ENCODE measurements at regions of chr10 and their contacts with region 1.

Region 1: GRCh38 chr10:71893920-71894319 is 42.9 kb upstream of the PSAP start:
- DNase-seq: no peak
- H3K4me3 Mint-ChIP-seq: no peak overlapping the region
- H3K27ac Mint-ChIP-seq: no peak overlapping the region
- H3K4me1 Mint-ChIP-seq: peaks cover 6% of the 10 kb centered on the region
- H3K27me3 Mint-ChIP-seq: peaks cover 4% of the 10 kb centered on the region

Region 2: DNA sequence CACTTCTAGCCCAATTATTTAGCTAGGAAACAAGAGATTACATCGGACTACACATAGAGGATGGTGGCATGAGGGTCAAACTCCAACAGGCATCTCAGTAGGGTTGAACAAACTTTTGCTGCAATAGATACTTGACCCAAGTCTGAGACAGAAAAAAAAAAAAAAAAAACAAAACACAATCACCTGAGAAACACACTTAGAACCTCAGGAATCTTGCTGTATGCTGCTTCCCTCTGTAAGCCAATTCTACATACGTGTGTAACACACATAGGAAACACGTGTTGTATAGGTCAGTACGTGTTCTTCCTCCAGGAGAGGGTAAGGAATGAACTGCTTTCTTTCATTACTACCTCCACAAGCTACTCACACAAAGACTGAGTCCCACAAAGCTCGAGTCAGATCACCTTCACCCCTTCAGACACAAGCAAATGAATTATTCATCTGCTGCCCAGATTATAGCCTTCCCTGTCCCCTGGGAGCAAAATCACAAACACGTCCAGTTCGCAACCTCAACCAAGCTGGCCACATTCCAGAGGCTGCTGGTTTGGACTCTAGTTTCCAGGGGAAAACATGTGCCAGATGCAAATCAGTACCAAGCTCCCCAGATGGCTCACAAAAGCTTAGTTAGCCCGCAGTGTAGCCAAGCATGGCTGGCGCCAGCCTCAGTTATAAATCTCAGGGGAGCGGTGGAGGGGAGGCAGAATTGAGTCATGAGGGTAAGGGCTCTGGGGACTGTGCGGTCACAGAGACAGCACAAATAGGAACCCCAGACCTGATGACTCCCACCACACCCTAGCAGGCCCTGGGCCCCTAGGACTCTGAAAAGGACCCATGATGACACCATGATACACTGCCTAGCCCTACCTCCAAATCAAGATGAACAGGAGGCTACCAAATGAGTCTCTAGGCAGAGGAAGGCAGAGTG is 58.0 kb before region 1 on chr10:
- intact Hi-C with region 1: loop called (anchors 10 kb)
- DNase-seq: no peak
- H3K4me3 Mint-ChIP-seq: no peak overlapping the region
- H3K27ac Mint-ChIP-seq: no peak overlapping the region
- H3K4me1 Mint-ChIP-seq: peaks cover 33% of the 10 kb centered on the region
- H3K27me3 Mint-ChIP-seq: no peaks in the 10 kb centered on the region

Region 3: DNA sequence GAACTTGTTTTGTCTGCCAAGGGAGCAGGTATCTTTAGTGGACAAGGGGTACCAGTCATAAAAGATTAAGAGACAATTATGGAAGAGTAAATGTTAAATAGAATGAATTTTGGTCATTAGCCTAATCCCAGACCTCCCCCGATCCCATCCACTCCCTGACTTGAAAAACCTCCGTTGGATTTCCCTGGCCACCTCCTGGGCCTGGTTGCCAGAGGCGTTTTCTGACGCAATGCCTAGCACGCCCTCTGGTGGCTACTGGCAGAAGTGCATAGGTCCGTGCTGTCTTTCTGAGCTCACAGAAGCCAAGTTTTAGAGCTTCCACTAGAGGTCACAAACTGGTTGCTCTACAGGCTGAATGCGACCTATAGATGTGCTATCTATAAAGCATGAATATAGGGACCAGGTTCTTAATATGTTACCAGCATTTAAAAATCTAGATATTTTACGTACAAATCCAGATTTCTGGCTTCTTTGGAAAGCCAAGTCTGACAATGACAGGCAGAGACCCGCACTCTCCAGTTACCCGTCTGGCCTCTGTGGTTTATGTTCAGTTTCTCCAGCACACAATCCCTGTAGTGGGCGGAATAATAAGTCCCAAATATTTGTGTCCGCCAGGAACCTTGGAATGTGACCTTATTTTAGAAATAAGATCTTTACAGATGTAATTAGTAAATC is 154.7 kb after region 1 on chr10:
- intact Hi-C with region 1: loop called (anchors 1 kb)
- DNase-seq: peak; percentile 95
- H3K4me3 Mint-ChIP-seq: no peak overlapping the region
- H3K27ac Mint-ChIP-seq: peak overlapping the region; percentile 72
- H3K4me1 Mint-ChIP-seq: peaks cover 6% of the 10 kb centered on the region
- H3K27me3 Mint-ChIP-seq: no peaks in the 10 kb centered on the region